Activated CD8-positive, alpha-beta T cell treated with anti-CD3 and anti-CD28 coated beads for 36 hours (primary cell): ENCODE measurements at regions of chr19 and their contacts with region 1.

Region 1: DNA sequence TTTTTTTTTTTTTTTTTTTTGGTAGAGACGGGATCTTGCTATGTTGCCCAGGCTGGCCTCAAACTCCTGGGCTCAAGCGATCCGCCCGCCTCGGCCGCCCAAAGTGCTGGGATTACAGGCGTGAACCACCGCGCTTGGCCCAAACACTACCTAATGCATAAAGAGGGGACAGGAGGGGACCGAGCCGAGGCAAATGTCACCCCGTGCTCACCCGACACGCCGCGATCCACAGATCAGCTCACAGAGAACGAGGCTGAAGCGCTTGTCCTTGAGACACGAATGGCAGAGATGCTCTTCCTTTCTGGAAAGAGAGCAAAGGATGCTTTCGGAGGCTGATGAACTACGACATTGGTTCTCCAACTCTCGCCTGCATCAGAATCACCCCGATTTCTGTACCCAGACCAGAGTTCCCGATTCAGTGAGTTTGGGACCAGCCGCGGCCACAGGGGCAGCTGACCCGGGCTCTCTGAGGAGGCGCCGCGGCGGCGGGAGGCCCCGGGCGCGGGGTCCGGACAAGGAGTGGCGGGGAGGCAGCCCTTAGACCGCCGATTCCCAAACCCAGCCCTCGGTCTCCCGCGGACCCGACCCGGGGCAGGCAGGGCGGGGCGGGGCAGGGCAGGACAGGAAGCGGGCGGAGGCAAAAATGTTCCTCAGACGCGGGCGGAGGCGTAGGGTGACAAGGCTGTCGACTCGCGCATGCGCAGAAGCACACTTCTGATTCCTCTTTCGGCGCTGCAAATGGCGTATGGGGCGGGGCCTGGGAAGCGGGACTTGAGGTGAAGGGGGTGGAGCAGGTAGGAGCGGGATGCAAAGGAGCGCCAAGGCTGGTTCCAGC is at the start of gene ZNF699:
- DNase-seq: peak; percentile 99
- ATAC-seq: peak; percentile 94
- H3K4me3 Mint-ChIP-seq: peak within 1 kb of the TSS; percentile 78
- H3K27ac Mint-ChIP-seq: peak within 1 kb of the TSS; percentile 96
- H3K4me1 Mint-ChIP-seq: peaks cover 17% of the 10 kb centered on the region
- H3K27me3 Mint-ChIP-seq: no peaks in the 10 kb centered on the region
- CTCF ChIP-seq: no peak
- total RNA-seq, gene ZNF699: 5.2 to 6.3 TPM

Region 2: DNA sequence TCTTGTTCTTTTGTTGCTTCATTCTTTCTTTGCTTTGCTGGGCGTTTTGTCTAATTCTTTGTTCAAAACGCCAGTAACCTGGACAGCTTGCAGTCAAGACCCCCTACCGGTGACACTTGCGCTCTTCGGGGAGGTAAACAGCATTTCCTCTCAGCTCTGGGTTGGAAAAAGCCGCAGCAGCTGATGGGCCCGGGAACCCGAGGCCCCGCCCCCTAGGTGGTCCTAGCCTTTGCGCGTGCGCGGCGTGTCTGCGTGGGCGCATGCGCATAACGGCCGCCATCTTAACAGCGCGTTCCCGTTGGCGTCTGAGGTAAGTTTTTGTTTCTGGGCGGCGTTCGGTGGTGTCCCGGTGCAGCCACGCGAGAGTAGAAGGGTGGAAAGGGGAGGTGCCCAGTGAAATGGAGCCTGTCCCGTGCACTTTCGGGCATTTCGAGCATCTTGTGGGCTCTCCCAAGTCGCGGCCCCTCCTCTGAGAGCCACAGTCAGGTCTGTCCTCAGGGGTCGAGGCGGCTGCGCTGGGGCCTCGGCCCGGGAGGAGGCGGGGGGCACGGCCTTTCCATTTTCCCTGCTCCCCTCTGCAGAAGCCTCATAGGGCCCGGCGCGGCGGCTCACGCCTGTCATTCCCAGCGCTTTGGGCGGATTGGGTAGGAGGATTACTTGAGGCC is 14.7 kb after region 1 on chr19 and contains the start of gene ZNF559:
- CTCF ChIA-PET with region 1: interaction called, 14 read pairs
- POLR2A ChIA-PET with region 1: interaction called, 3 read pairs
- intact Hi-C with region 1: no loop called
- DNase-seq: peak; percentile 96
- ATAC-seq: peak; percentile 97
- H3K4me3 Mint-ChIP-seq: peak within 1 kb of the TSS; percentile 91
- H3K27ac Mint-ChIP-seq: peak within 1 kb of the TSS; percentile 97
- H3K4me1 Mint-ChIP-seq: peaks cover 26% of the 10 kb centered on the region
- H3K27me3 Mint-ChIP-seq: no peaks in the 10 kb centered on the region
- CTCF ChIP-seq: no peak
- total RNA-seq, gene ZNF559: 12.9 to 15.8 TPM